Natural killer cell (primary cell): ENCODE measurements at regions of chr7 and their contacts with region 1.

Region 1: GRCh38 chr7:132485600-132486273 is 90.5 kb downstream of the PLXNA4 start:
- DNase-seq: peak; percentile 47 to 85
- ATAC-seq: peak; percentile 81 to 86 (median 85)
- H3K4me3 ChIP-seq: no peak overlapping the region
- H3K4me3 Mint-ChIP-seq: peak overlapping the region; percentile 80
- H3K27ac ChIP-seq: peak overlapping the region; percentile 73
- H3K27ac Mint-ChIP-seq: peak overlapping the region; percentile 87 to 88
- H3K4me1 ChIP-seq: peaks cover 66% of the 10 kb centered on the region
- H3K4me1 Mint-ChIP-seq: peaks cover 72 to 74% of the 10 kb centered on the region in 2 donors
- H3K27me3 ChIP-seq: no peaks in the 10 kb centered on the region
- H3K27me3 Mint-ChIP-seq: peaks cover 0 to 19% of the 10 kb centered on the region in 2 donors
- CTCF ChIP-seq: no peak

Region 2: DNA sequence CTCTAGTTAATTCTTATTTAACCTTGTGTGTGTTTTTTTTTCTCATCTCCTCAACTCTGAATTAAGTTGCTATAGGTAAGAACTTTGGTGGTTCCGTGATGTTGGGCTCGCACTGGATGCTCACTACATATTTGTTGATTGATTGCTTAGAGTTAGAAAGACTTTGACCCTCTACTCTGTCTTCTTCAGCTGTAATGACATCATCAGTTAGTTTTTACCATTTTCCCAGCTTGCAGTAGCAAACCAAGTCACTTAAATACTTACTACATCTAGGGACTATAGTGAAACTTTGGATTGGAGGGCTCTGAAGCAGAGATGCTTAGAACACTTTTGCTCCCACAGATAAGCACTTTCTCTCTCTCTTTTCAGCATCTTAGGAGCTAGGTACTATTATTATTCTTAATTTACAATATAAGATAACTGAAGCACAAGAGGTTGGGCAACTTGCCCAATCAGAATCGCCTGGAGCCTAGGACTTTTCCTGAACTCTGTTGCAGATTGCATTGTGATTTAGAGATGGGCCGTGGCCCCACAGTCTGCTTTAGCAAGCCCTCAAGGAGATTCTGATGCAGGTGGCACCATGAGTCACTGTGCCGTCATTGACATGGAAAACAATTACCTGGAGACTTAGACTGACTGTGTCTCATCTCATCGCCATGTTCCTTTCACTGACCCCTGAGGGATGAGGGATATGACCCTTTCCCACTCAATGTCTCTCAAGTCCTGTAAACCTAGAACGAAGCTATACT is 457.4 kb before region 1 on chr7:
- intact Hi-C with region 1: no loop called
- DNase-seq: no peak
- ATAC-seq: no peak
- H3K4me3 ChIP-seq: no peak overlapping the region
- H3K4me3 Mint-ChIP-seq: no peak overlapping the region
- H3K27ac ChIP-seq: no peak overlapping the region
- H3K27ac Mint-ChIP-seq: no peak overlapping the region
- H3K4me1 ChIP-seq: no peaks in the 10 kb centered on the region
- H3K4me1 Mint-ChIP-seq: no peaks in the 10 kb centered on the region
- H3K27me3 ChIP-seq: no peaks in the 10 kb centered on the region
- H3K27me3 Mint-ChIP-seq: no peaks in the 10 kb centered on the region
- CTCF ChIP-seq: no peak

Region 3: GRCh38 chr7:132368246-132368900 is 117.4 kb before region 1 on chr7:
- intact Hi-C with region 1: no loop called
- DNase-seq: no peak
- ATAC-seq: no peak
- H3K4me3 ChIP-seq: no peak overlapping the region
- H3K4me3 Mint-ChIP-seq: no peak overlapping the region
- H3K27ac ChIP-seq: no peak overlapping the region
- H3K27ac Mint-ChIP-seq: no peak overlapping the region
- H3K4me1 ChIP-seq: no peaks in the 10 kb centered on the region
- H3K4me1 Mint-ChIP-seq: no peaks in the 10 kb centered on the region
- H3K27me3 ChIP-seq: no peaks in the 10 kb centered on the region
- H3K27me3 Mint-ChIP-seq: peaks cover 14 to 22% of the 10 kb centered on the region in 2 donors
- CTCF ChIP-seq: no peak

Region 4: DNA sequence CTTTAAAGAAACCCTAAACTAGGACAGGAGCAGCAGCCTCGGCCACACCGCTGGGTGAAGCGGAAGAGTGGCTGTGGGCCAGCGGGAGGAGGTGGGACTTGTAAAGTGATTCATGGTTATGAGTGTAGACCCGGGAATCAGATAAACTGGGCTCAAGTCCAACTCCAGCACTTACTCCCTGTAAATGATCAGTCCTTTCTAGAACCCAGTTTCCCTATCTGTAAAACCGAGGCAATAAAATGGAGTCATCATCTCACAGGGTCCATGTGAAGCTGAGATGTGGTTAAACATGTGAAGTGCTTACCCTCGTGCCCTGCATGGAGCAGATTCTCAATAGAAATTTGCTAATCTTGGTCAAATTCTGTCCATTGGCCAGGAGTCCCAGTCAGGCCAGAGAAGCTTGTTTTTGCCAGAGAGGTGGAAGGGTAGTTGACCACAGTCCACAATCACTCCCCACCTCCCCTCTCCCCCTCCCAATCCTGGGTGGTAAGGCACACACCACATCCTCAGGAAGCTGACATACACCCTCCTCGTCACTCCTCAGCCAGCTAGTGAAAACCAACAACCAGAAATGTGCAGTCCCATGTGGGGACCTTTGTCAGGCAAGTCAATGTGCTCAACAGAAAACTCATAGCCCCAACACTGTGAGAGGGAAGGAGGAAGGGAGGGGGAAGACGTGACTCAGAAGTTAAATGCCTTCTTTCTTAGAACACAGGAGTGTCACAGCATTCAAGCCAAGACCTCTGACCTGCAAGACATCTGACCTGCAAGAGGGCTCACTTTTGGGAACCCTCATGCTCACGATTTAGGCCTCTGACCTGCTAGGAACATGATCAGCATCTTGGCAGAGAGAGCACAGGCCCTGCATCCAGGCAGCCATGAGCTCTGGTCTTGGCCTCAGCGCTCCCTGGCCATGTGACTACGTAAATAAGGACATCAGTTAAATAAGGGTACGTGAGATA is 54.6 kb before region 1 on chr7:
- intact Hi-C with region 1: loop called (anchors 1 kb)
- DNase-seq: peak; percentile 66 to 84
- ATAC-seq: peak; percentile 82 to 89 (median 86)
- H3K4me3 ChIP-seq: no peak overlapping the region
- H3K4me3 Mint-ChIP-seq: peak overlapping the region; percentile 51
- H3K27ac ChIP-seq: peak overlapping the region; percentile 94
- H3K27ac Mint-ChIP-seq: peak overlapping the region; percentile 82 to 88
- H3K4me1 ChIP-seq: peaks cover 88% of the 10 kb centered on the region
- H3K4me1 Mint-ChIP-seq: peaks cover 81 to 88% of the 10 kb centered on the region in 2 donors
- H3K27me3 ChIP-seq: no peaks in the 10 kb centered on the region
- H3K27me3 Mint-ChIP-seq: no peaks in the 10 kb centered on the region
- CTCF ChIP-seq: no peak

Region 5: DNA sequence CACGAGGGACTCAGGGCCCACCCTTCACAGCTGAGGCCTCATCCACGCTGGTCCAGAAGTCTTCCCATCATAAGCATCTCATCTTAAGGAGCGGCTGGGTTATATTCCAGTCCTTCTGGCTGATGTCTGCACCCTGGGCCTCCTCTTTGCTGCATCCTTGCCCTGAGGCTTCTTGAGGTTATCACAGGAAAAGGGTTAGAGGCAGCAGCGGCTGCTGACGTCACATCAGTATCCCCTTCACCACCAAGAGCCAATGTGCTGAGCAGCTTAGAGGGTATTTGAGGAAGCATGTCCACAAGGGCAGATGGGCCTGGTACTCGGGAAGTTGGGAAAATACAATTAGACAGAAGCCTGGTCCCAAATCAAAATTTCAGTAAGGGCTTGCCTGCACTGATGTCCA is 34.6 kb before region 1 on chr7:
- intact Hi-C with region 1: loop called (anchors 1 kb)
- DNase-seq: peak; percentile 66 to 78
- ATAC-seq: peak; percentile 78 to 86 (median 78)
- H3K4me3 ChIP-seq: no peak overlapping the region
- H3K4me3 Mint-ChIP-seq: peak overlapping the region; percentile 79
- H3K27ac ChIP-seq: peak overlapping the region; percentile 64
- H3K27ac Mint-ChIP-seq: peak overlapping the region; percentile 94 to 96
- H3K4me1 ChIP-seq: peaks cover 73% of the 10 kb centered on the region
- H3K4me1 Mint-ChIP-seq: peaks cover 81 to 90% of the 10 kb centered on the region in 2 donors
- H3K27me3 ChIP-seq: no peaks in the 10 kb centered on the region
- H3K27me3 Mint-ChIP-seq: peaks cover 0 to 3% of the 10 kb centered on the region in 2 donors
- CTCF ChIP-seq: no peak

Region 6: DNA sequence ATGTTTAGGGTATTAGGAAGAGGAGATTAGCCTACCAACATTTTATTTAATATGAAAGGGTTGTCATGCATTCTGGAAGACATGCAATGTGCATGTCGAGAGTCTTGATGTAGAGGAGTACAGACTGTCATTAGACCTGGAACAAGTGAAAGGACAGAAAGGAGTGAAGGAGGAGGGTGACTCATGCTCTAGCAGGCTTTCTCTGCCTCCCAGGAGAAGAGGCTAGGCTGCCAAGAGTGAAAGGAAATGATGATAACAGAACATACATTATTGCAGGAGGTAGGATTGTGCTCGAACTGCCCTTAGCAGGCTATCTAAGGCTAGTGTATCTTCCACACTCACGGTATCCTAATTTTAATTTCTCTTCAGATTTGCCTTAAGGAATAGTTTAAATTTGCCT is 995.9 kb after region 1 on chr7:
- intact Hi-C with region 1: loop called (anchors 2 kb)
- DNase-seq: peak in 1 of 2 donors; percentile 8
- ATAC-seq: peak in 1 of 3 donors; percentile 19
- H3K4me3 ChIP-seq: no peak overlapping the region
- H3K4me3 Mint-ChIP-seq: peak overlapping the region; percentile 86
- H3K27ac ChIP-seq: no peak overlapping the region
- H3K27ac Mint-ChIP-seq: peak overlapping the region; percentile 70 to 83
- H3K4me1 ChIP-seq: peaks cover 62% of the 10 kb centered on the region
- H3K4me1 Mint-ChIP-seq: peaks cover 89 to 92% of the 10 kb centered on the region in 2 donors
- H3K27me3 ChIP-seq: no peaks in the 10 kb centered on the region
- H3K27me3 Mint-ChIP-seq: no peaks in the 10 kb centered on the region
- CTCF ChIP-seq: no peak